ENCODE measurements at regions of chr7 and their contacts with region 1.

Region 1: GRCh38 chr7:54215424-54215823 is 326.8 kb upstream of the VSTM2A start:
- DNase-seq: no peak
- ATAC-seq: no peak
- H3K4me3 Mint-ChIP-seq: no peak overlapping the region
- H3K27ac Mint-ChIP-seq: no peak overlapping the region
- H3K4me1 Mint-ChIP-seq: no peaks in the 10 kb centered on the region
- H3K27me3 Mint-ChIP-seq: no peaks in the 10 kb centered on the region

Region 2: GRCh38 chr7:54299426-54299825 is 84.0 kb after region 1 on chr7:
- CTCF ChIA-PET with region 1: no interaction called
- POLR2A ChIA-PET with region 1: no interaction called
- intact Hi-C with region 1: loop called in 1 of 2 experiments (anchors 10 kb)
- DNase-seq: no peak
- ATAC-seq: no peak
- H3K4me3 Mint-ChIP-seq: no peak overlapping the region
- H3K27ac Mint-ChIP-seq: no peak overlapping the region
- H3K4me1 Mint-ChIP-seq: no peaks in the 10 kb centered on the region
- H3K27me3 Mint-ChIP-seq: no peaks in the 10 kb centered on the region